Activated naive CD8-positive, alpha-beta T cell treated with anti-CD3 and anti-CD28 coated beads, Interleukin-2, amount 10 ng/mL, durations not matched to agents 7 days and 5 days (primary cell): ENCODE measurements at regions of chr16 and their contacts with region 1.

Region 1: GRCh38 chr16:89361751-89362539 is 128.4 kb downstream of the ANKRD11 start:
- DNase-seq: no peak
- ATAC-seq: no peak
- H3K4me3 Mint-ChIP-seq: peak overlapping the region; percentile 79
- H3K27ac Mint-ChIP-seq: peak overlapping the region; percentile 87
- H3K4me1 Mint-ChIP-seq: peaks cover 80% of the 10 kb centered on the region
- H3K27me3 Mint-ChIP-seq: no peaks in the 10 kb centered on the region

Region 2: DNA sequence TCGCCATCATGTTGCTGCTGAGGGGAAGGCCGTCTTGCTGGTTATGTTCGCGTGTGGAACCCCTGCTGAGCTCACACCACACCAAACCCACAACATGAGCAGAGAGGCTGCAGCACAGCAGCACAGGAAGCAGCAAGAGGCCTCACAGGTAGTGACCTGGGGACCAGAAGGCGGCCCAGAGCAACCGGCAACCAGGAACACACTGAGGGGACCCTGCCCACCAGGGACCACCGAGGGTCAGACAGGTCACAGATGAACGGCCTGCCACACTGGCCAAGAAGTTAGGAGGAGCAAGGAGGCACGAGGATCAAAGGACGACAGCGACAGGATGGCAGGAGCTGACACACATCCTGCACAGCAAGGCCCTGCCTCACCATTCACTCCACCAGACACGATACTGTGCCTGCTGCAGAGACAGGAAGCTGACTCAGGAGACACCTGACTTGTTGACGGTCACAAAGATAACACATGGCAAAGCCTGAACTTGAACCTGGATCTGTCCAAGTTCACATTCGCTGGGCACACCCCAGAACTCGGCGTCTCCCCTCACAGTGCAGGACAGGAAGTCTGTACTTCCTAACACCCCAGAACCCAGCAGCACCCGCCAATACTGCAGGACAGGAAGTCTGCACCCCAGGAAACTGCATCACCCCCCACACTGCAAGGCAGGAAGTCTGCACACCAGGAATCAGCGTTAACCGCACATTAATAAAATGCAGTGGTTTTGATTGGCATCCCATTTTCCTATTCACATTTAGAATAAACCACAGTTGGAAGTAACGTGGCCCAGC is 46.0 kb before region 1 on chr16:
- POLR2A ChIA-PET with region 1: interaction called, 10 read pairs
- DNase-seq: peak; percentile 78
- ATAC-seq: peak; percentile 92
- H3K4me3 Mint-ChIP-seq: peak overlapping the region; percentile 76
- H3K27ac Mint-ChIP-seq: peak overlapping the region; percentile 99
- H3K4me1 Mint-ChIP-seq: peaks cover 75% of the 10 kb centered on the region
- H3K27me3 Mint-ChIP-seq: no peaks in the 10 kb centered on the region

Region 3: GRCh38 chr16:89374393-89374960 is 12.5 kb after region 1 on chr16:
- POLR2A ChIA-PET with region 1: no interaction called
- DNase-seq: no peak
- ATAC-seq: no peak
- H3K4me3 Mint-ChIP-seq: no peak overlapping the region
- H3K27ac Mint-ChIP-seq: no peak overlapping the region
- H3K4me1 Mint-ChIP-seq: peaks cover 38% of the 10 kb centered on the region
- H3K27me3 Mint-ChIP-seq: no peaks in the 10 kb centered on the region